Sciatic nerve (tissue), 2 donors: ENCODE measurements at regions of chr5 and their contacts with region 1.

Region 1: DNA sequence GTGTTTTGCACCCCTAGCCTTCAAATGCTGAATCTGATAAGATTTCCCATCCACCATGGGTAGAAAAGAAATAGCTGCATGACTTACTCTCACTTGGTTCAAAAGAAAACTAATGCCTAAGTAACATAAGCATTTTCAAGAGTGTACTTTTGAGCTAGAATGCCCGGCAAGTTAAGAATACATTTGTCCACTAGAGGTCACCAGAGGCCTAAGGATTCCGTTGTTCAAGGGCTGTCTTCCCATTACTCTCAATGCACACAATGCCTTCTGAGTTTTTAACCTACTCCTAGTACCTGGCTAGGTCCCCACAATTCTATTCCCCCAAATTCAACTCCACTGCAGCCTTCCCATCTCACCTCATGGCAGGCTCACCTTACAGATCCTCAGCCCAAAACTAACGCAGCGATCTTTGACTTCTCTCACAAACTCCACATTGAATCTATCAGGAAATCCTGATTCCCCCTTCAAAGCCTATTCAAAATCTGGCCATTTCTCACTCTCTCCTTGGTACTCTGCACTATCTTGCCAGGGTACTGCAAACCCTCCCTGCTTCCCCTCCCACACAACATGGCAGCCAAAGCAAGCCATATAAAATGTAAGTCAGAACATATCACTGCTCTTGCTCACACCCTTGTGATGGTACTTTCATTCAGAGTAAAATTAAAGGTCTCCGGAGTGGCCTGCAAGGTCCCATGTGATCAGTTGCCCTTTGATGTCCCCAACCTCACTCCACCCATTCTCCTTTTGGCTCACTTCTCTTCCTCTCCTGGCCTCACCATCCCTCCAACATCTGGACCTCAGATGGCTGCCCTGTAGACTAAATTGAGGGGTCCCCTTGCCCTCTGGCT is 13.4 kb downstream of the OXCT1 start:
- DNase-seq: no peak
- ATAC-seq: peak; percentile 91

Region 2: GRCh38 chr5:41433552-41434181 is 423.2 kb before region 1 on chr5:
- intact Hi-C with region 1: no loop called
- DNase-seq: no peak
- ATAC-seq: no peak

Region 3: DNA sequence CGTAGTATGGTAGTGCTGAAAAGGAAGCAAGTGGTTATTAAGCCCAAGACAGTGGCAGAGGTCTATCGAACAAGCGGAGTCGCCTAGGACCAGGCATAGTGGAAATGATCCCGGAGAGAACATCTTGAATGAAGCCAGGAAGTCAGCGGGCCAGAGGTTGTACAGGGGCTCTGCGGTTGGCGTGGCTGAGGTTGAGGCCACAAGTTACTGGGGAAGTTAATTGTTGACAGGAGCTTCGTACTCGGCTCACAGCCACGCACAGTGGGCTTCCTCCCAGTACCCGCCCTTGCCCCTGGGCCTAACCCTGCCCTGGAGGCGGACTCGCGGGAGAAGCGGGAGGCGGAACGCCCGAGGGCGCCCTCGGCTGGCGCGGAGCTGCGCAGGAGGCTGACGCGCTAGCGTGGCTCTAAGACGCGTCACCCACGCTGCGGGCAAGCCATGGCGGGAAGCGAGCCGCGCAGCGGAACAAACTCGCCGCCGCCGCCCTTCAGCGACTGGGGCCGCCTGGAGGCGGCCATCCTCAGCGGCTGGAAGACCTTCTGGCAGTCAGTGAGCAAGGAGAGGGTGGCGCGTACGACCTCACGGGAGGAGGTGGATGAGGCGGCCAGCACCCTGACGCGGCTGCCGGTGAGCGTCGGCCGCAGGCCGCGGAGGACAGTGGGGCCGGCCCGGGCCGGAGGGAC is 68.1 kb after region 1 on chr5 and contains the start of gene FBXO4:
- intact Hi-C with region 1: loop called (anchors 10 kb)
- DNase-seq: peak; percentile 92
- ATAC-seq: peak; percentile 99
- total RNA-seq, gene FBXO4: 12.2 TPM

Region 4: DNA sequence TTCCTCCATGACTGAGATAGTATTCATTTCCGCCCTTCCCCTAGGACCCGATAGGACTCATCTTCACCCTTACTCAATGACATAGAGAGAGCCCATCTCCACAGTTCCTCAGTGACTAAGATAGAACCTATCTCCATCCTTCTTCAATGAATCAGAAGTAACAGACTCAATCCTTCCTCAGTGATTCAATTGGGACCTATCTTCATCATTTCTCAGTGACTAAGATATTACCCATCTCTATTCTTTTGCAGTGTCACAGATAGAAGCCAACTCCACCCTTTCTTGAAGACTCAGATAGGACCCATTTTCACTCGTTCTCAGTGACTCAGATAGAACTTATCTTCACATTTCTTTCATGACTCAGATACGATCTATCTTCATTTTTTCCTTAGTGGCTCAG is 232.8 kb after region 1 on chr5:
- intact Hi-C with region 1: no loop called
- DNase-seq: no peak
- ATAC-seq: no peak

Region 5: GRCh38 chr5:42767491-42768105 is 910.7 kb after region 1 on chr5:
- intact Hi-C with region 1: loop called (anchors 10 kb)
- DNase-seq: no peak
- ATAC-seq: peak; percentile 59